Heart left ventricle (tissue), 16 donors: ENCODE measurements at regions of chr14 and their contacts with region 1.

Region 1: GRCh38 chr14:84254290-84254689 is 1275.7 kb upstream of the FLRT2 start:
- DNase-seq: peak in 2 of 5 donors; percentile 37 to 42
- ATAC-seq: peak; percentile 80 to 96 (median 84)
- H3K4me3 ChIP-seq: peak overlapping the region in 3 of 12 donors; percentile 2 to 4 (median 2)
- H3K27ac ChIP-seq: peak overlapping the region in 1 of 12 donors; percentile 2
- H3K4me1 ChIP-seq: peaks cover 0 to 35% (median 2%) of the 10 kb centered on the region in 12 donors
- H3K27me3 ChIP-seq: no peaks in the 10 kb centered on the region
- CTCF ChIP-seq: no peak
- POLR2A ChIP-seq: no peak

Region 2: DNA sequence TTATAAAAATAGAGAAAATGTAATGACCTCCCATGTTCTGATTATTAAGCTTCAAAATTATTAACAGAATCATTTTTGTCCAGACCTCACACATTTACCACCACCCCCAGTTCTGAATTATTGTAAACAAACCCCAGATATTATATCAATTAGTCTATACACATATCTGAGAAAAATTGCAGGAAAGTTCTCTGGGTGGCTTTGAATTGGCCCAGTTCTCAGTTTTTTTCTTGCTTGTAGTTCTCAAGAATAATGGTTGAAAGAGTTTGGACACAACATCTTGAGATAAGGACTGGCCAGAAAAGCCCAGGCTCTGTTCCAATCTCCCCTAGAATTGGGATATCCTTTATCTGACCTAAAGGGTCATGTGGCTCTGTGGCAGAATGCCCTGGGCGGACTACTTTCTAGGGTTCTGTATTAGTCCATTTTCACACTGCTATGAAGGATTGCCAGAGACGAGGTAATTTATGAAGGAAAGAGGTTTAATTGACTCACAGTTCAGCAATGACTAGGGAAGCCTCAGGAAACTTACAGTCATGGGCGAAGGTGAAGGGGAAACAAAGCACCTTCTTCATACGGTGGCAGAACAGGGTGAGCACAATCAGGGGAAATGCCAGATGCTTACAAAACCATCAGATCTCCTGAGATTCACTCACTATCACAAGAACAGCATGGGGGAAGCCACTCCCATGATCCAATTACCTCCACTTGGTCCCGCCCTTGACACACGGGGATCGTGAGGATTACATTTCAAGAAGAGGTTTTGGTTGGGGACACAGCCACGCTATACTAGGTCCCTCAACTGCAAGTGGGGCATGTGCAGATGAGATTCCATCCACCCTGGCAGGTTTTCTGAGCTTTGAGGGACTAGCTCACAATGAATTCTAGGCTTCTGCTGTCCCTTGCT is 228.9 kb before region 1 on chr14:
- intact Hi-C with region 1: no loop called
- DNase-seq: peak in 1 of 5 donors; percentile 40
- ATAC-seq: no peak
- H3K4me3 ChIP-seq: no peak overlapping the region
- H3K27ac ChIP-seq: no peak overlapping the region
- H3K4me1 ChIP-seq: peaks cover 0 to 4% (median 0%) of the 10 kb centered on the region in 12 donors
- H3K27me3 ChIP-seq: no peaks in the 10 kb centered on the region
- CTCF ChIP-seq: no peak
- POLR2A ChIP-seq: no peak

Region 3: GRCh38 chr14:84303140-84303539 is 48.9 kb after region 1 on chr14:
- intact Hi-C with region 1: no loop called
- DNase-seq: no peak
- ATAC-seq: no peak
- H3K4me3 ChIP-seq: no peak overlapping the region
- H3K27ac ChIP-seq: no peak overlapping the region
- H3K4me1 ChIP-seq: peaks cover 0 to 5% (median 0%) of the 10 kb centered on the region in 12 donors
- H3K27me3 ChIP-seq: no peaks in the 10 kb centered on the region
- CTCF ChIP-seq: no peak
- POLR2A ChIP-seq: no peak

Region 4: DNA sequence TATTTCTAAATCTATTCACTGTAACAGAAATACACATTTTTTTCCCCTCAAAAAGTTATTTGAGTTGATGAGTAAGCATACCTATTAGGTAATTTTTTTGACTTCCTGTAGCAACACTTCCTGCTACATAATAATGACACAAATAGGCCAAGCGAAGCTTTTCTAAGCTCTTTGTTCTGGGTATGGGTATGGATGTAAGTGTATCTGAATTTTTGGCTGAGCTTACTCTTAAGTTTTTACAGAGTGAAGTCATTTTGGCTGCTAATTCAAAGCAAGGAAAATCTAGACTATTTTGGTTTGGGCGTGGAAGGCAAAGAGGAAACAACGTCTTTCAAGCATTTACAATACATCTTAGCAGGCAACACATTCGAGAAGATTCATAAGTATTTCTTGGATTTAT is 69.7 kb after region 1 on chr14:
- intact Hi-C with region 1: loop called in 1 of 10 experiments (anchors 5 kb)
- DNase-seq: no peak
- ATAC-seq: peak in 2 of 4 donors; percentile 64 to 87
- H3K4me3 ChIP-seq: no peak overlapping the region
- H3K27ac ChIP-seq: peak overlapping the region in 6 of 12 donors; percentile 5 to 61 (median 52)
- H3K4me1 ChIP-seq: peaks cover 0 to 9% (median 0%) of the 10 kb centered on the region in 12 donors
- H3K27me3 ChIP-seq: no peaks in the 10 kb centered on the region
- CTCF ChIP-seq: no peak
- POLR2A ChIP-seq: no peak